Prostate gland (tissue), 2 donors: ENCODE measurements at regions of chr2 and their contacts with region 1.

Region 1: DNA sequence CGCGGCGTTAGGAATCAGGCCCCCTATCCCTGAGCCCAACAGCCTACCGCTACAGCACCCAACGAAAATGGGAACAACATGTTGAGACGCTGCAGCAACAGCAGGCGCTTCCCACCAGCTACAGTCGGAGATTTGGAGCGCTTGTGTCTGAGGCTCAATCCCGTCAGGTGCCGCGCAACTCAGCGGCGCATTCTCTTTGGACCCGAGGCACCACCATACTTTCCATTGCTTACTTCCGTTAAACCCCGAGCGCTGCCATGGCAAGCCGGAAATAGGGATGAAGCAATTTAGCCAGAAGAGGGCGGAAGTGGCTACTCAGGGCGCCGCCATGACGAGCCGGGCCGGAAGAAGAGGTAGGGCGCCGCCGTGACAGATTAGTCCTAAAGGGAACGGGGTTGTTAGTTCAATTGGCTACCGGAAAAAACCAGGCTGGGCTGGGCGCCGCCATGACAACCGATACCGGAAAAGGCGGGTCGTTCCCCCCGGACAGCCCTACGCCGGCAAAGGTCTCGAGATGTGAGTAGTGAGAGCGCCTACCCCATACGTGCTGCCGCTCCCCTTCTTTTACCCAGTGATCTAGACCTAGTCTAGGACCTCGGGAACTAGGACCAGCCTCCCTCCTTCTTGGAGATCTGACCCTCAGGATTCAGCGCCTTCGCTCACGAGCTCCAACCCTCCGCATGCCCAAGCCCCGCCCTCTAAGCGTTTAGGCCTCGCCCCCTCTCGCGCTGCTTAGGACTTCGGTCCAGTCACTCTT is at the start of gene CHCHD5:
- DNase-seq: peak; percentile 95
- H3K4me3 ChIP-seq: peak within 1 kb of the TSS; percentile 47 to 51
- H3K27ac ChIP-seq: peak within 1 kb of the TSS; percentile 90 to 92
- H3K4me1 ChIP-seq: peaks cover 5% of the 10 kb centered on the region
- H3K27me3 ChIP-seq: no peaks in the 10 kb centered on the region
- CTCF ChIP-seq: peak in 3 of 4 experiments; percentile 29 to 54 (median 50)
- POLR2A ChIP-seq: peak; percentile 38
- total RNA-seq, gene CHCHD5: 26.3 to 35.4 TPM

Region 2: GRCh38 chr2:112254466-112255239 is 329.7 kb before region 1 on chr2 and contains the start of gene ZC3H8:
- intact Hi-C with region 1: loop called (anchors 5 kb)
- DNase-seq: peak; percentile 92
- H3K4me3 ChIP-seq: peak within 1 kb of the TSS; percentile 55 to 73
- H3K27ac ChIP-seq: peak within 1 kb of the TSS; percentile 84 to 85
- H3K4me1 ChIP-seq: peaks cover 6% of the 10 kb centered on the region
- H3K27me3 ChIP-seq: no peaks in the 10 kb centered on the region
- CTCF ChIP-seq: no peak
- POLR2A ChIP-seq: peak; percentile 84
- total RNA-seq, gene ZC3H8: 3.3 to 4.9 TPM

Region 3: GRCh38 chr2:112275306-112275886 is 308.9 kb before region 1 on chr2 and contains the start of gene ZC3H6:
- intact Hi-C with region 1: loop called (anchors 5 kb)
- DNase-seq: peak; percentile 98
- H3K4me3 ChIP-seq: peak within 1 kb of the TSS; percentile 95 to 98
- H3K27ac ChIP-seq: peak within 1 kb of the TSS; percentile 100
- H3K4me1 ChIP-seq: no peaks in the 10 kb centered on the region
- H3K27me3 ChIP-seq: no peaks in the 10 kb centered on the region
- CTCF ChIP-seq: peak; percentile 16 to 70 (median 42)
- POLR2A ChIP-seq: peak; percentile 93
- total RNA-seq, gene ZC3H6: 10.2 to 10.5 TPM

Region 4: GRCh38 chr2:112342067-112342550 is 242.2 kb before region 1 on chr2:
- intact Hi-C with region 1: no loop called
- DNase-seq: no peak
- H3K4me3 ChIP-seq: no peak overlapping the region
- H3K27ac ChIP-seq: no peak overlapping the region
- H3K4me1 ChIP-seq: no peaks in the 10 kb centered on the region
- H3K27me3 ChIP-seq: no peaks in the 10 kb centered on the region
- CTCF ChIP-seq: no peak
- POLR2A ChIP-seq: no peak

Region 5: GRCh38 chr2:112481050-112481527 is 103.2 kb before region 1 on chr2:
- intact Hi-C with region 1: loop called (anchors 5 kb)
- DNase-seq: peak; percentile 77
- H3K4me3 ChIP-seq: peak overlapping the region; percentile 60 to 78
- H3K27ac ChIP-seq: peak overlapping the region; percentile 79 to 89
- H3K4me1 ChIP-seq: no peaks in the 10 kb centered on the region
- H3K27me3 ChIP-seq: no peaks in the 10 kb centered on the region
- CTCF ChIP-seq: peak in 3 of 4 experiments; percentile 53 to 76 (median 73)
- POLR2A ChIP-seq: no peak

Region 6: GRCh38 chr2:112542123-112542983 is 42.0 kb before region 1 on chr2 and contains the start of gene POLR1B:
- intact Hi-C with region 1: loop called (anchors 5 kb)
- DNase-seq: peak; percentile 80
- H3K4me3 ChIP-seq: peak within 1 kb of the TSS; percentile 60 to 67
- H3K27ac ChIP-seq: peak within 1 kb of the TSS; percentile 86 to 87
- H3K4me1 ChIP-seq: peaks cover 5% of the 10 kb centered on the region
- H3K27me3 ChIP-seq: no peaks in the 10 kb centered on the region
- CTCF ChIP-seq: no peak
- POLR2A ChIP-seq: peak; percentile 18
- total RNA-seq, gene POLR1B: 13.1 to 14.0 TPM

Region 7: DNA sequence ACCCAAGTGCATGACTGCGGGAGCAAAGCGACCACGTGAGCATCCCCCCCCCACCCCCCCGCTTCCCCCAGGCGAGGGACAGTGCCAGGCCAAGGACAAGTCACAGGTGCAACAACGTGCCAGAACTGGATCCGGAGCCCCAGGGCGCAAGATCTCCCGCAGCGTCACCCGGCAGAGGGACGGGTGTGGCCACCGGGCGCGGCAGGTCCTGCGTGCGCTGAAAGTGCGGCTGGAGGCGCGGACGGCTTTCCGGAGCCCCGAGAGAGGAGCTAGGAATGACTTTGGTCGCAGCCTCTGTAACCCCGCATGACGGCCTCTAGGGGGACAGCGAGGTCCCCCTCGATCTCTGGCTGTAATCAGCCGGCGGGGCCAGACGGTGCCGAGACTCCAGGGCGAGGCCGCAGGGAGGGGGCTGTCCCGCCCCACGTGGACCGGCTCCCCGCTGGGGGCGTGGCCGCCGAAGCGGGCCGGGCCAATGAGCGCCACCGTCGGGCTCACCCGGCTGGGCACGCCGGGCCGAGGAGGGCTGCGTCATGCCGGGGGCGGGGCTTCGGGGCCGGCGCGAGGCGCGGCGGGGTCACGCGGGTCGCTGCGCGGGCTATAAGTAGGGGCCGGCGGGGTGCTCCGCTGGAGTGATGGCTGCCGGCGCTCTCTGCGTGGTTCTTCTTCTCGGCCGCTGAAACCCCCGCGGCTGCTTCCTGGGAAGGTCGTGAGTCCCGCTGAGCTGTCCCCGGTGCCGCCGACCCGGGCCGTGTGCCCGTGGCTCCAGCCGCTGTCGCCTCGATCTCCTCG is 61.2 kb after region 1 on chr2 and contains the start of gene SLC20A1:
- intact Hi-C with region 1: loop called (anchors 2 kb)
- DNase-seq: peak; percentile 92
- H3K4me3 ChIP-seq: peak within 1 kb of the TSS; percentile 58 to 79
- H3K27ac ChIP-seq: peak within 1 kb of the TSS; percentile 94 to 95
- H3K4me1 ChIP-seq: peaks cover 4% of the 10 kb centered on the region
- H3K27me3 ChIP-seq: no peaks in the 10 kb centered on the region
- CTCF ChIP-seq: peak in 3 of 4 experiments; percentile 23 to 33 (median 28)
- POLR2A ChIP-seq: peak; percentile 98
- total RNA-seq, gene SLC20A1: 10.7 to 34.1 TPM